GM10248 (cell line): ENCODE measurements at regions of chr22 and their contacts with region 1.

Region 1: DNA sequence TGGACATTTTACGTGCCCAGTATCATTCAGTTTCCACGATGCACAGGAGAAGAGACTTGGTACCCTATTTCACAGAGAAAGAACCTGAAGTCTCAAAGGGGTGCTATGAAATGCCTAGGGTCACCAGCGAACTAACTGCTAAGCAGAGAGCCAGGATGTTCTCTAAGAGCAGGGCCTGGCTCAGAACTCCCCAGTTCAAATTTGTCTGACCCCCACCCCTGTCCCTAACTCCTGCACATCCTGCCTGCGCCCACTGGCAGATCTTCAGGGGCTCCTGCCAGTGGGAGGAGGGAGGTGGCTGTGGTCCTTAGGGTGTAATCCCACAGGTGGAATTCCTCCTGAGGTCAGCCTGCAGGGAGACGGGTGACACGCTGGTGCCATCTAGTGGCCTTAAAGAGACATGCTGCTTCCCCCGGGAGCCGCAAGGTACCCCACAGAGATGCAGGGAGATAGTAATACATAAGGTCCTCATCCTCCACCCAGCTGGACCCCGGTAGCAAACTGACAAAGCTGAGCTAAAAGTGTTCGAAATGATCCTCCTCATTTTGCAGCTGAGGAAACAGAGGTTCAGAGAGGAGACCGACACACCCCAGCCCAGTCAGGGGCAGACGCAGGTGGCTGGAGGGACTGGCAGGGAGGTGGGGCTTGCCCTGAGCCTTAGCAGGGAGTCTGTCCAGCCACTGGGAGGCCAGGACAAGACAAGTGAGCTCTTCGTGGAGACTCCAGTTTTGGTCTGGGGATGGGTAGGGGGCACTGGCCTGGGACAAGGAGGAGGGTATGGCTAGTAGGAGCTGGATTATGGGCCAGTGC is 34.1 kb downstream of the MB start:
- DNase-seq: peak; percentile 88
- CTCF ChIP-seq: peak; percentile 89

Region 2: GRCh38 chr22:35430897-35431322 is 152.2 kb before region 1 on chr22:
- CTCF ChIA-PET with region 1: interaction called, 22 read pairs
- POLR2A ChIA-PET with region 1: no interaction called
- DNase-seq: peak; percentile 73
- CTCF ChIP-seq: peak; percentile 44

Region 3: DNA sequence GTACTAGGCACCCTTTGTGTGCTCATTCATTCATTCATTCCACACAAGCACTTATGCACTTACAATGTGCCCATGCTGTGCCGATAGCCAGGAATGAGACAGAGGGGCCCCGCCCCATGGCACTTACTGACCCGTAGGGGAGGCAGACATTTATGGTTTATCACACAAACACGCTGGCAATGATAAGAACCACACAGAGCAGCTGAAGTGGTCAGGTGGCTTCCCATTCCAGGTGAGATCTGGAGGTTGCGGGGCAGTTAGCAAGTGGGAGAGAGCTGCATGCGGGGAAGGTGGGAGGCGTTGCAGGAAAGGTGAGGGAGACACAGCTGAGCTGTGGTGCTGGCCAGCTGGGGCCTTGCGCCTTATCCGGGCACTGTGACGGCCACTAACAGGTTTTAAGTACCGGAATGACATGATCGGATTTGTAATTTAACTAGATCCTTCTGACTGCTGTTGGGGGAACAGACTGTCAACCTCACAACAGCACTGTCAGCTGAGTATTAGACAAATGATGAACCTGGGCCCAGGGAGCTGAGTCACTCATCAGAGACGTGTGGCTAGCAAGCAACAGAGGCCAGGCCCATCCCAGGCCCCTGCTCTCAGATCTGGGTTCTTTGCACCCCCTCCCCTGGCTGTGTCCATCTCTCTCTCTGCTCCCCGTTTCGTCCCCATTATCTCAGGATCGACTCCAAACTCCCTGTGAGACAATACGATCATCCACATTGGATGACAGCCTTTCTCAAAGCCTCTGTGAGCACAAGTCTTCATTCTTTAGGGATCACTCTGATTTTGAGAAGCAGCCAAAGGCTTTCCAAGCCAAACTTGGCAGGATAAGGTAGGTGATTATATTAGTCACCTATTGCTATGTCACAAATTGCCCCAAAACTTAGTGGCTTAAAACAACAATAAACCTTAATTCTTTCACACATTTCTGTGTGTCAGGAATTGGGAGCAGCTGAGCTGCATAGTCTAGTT is 14.0 kb before region 1 on chr22:
- CTCF ChIA-PET with region 1: interaction called, 10 read pairs
- POLR2A ChIA-PET with region 1: no interaction called
- DNase-seq: no peak
- CTCF ChIP-seq: no peak